Activated CD8-positive, alpha-beta memory T cell treated with anti-CD3 and anti-CD28 coated beads, Interleukin-2, amount 10 ng/mL, durations not matched to agents 7 days and 5 days (primary cell): ENCODE measurements at regions of chr16 and their contacts with region 1.

Region 1: GRCh38 chr16:82263521-82264143 is 93.6 kb upstream of the MPHOSPH6 start:
- DNase-seq: peak; percentile 64
- ATAC-seq: peak; percentile 70
- H3K4me3 Mint-ChIP-seq: no peak overlapping the region
- H3K27ac Mint-ChIP-seq: no peak overlapping the region
- H3K4me1 Mint-ChIP-seq: peaks cover 3% of the 10 kb centered on the region
- H3K27me3 Mint-ChIP-seq: peaks cover 20% of the 10 kb centered on the region

Region 2: GRCh38 chr16:82456683-82457082 is 193.1 kb after region 1 on chr16:
- CTCF ChIA-PET with region 1: interaction called, 29 read pairs
- DNase-seq: peak; percentile 53
- ATAC-seq: no peak
- H3K4me3 Mint-ChIP-seq: no peak overlapping the region
- H3K27ac Mint-ChIP-seq: no peak overlapping the region
- H3K4me1 Mint-ChIP-seq: no peaks in the 10 kb centered on the region
- H3K27me3 Mint-ChIP-seq: peaks cover 2% of the 10 kb centered on the region

Region 3: GRCh38 chr16:83215406-83216001 is 951.9 kb after region 1 on chr16:
- CTCF ChIA-PET with region 1: interaction called, 13 read pairs
- DNase-seq: peak; percentile 45
- ATAC-seq: peak; percentile 45
- H3K4me3 Mint-ChIP-seq: no peak overlapping the region
- H3K27ac Mint-ChIP-seq: no peak overlapping the region
- H3K4me1 Mint-ChIP-seq: no peaks in the 10 kb centered on the region
- H3K27me3 Mint-ChIP-seq: no peaks in the 10 kb centered on the region